Body of pancreas (tissue), 4 donors: ENCODE measurements at regions of chr5 and their contacts with region 1.

Region 1: DNA sequence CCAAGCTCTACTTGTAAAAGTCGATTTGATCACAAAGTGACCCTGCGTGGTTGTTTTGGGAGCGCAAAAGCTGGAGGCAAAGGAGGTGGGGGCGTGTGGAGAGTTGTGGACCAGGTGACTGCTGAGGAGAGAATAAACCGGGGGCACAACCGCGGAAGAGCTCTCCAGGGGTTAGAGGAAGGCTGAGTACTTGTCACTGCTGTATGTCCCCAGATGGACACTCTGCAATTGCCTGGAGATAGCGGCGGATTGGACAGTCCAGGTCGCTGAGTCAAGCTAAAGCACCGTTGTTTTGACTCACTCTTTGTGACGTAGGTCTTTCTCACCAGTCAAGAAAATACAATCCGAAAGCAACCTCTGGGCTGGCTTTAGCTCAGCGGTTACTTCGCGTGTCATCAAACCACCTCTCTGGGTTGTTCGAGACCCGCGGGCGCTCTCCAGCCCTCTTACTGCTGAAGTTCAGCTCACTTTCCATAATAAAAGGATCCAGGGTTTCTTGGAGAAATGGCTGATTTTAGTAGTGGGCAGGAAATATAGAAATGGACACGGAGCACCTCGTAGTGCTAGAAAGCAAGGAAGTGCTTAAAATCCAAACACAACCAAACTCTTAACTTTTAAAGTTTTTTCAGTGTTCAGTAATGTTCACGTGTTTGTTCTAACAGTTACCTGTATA is 25.7 kb downstream of the ZMAT2 start:
- DNase-seq: peak; percentile 81 to 88 (median 82)
- ATAC-seq: peak; percentile 97
- H3K4me3 ChIP-seq: no peak overlapping the region
- H3K27ac ChIP-seq: no peak overlapping the region
- H3K4me1 ChIP-seq: no peaks in the 10 kb centered on the region
- H3K27me3 ChIP-seq: no peaks in the 10 kb centered on the region
- CTCF ChIP-seq: no peak
- POLR2A ChIP-seq: no peak

Region 2: GRCh38 chr5:140372971-140373487 is 352.9 kb before region 1 on chr5:
- intact Hi-C with region 1: loop called (anchors 10 kb)
- DNase-seq: peak; percentile 72 to 78 (median 76)
- ATAC-seq: peak; percentile 91
- H3K4me3 ChIP-seq: no peak overlapping the region
- H3K27ac ChIP-seq: no peak overlapping the region
- H3K4me1 ChIP-seq: peaks cover 8% of the 10 kb centered on the region
- H3K27me3 ChIP-seq: no peaks in the 10 kb centered on the region
- CTCF ChIP-seq: peak; percentile 62 to 86 (median 72)
- POLR2A ChIP-seq: no peak

Region 3: GRCh38 chr5:141359790-141360426 is 634.0 kb after region 1 on chr5 and contains the start of gene PCDHGB2:
- intact Hi-C with region 1: no loop called
- DNase-seq: no peak
- ATAC-seq: peak; percentile 24
- H3K4me3 ChIP-seq: no peak within 1 kb of the TSS
- H3K27ac ChIP-seq: no peak within 1 kb of the TSS
- H3K4me1 ChIP-seq: no peaks in the 10 kb centered on the region
- H3K27me3 ChIP-seq: no peaks in the 10 kb centered on the region
- CTCF ChIP-seq: peak in 4 of 7 experiments; percentile 19 to 35 (median 28)
- POLR2A ChIP-seq: no peak
- total RNA-seq, gene PCDHGB2: 2.3 to 9.3 TPM